ENCODE measurements at regions of chr12 and their contacts with region 1.

Region 1: GRCh38 chr12:10243818-10244520 is 31.3 kb downstream of the GABARAPL1 start:
- DNase-seq: no peak
- H3K4me3 ChIP-seq: no peak overlapping the region
- CTCF ChIP-seq: no peak
- POLR2A ChIP-seq: no peak

Region 2: GRCh38 chr12:9169979-9170634 is 1073.9 kb before region 1 on chr12:
- intact Hi-C with region 1: no loop called
- DNase-seq: no peak
- H3K4me3 ChIP-seq: no peak overlapping the region
- CTCF ChIP-seq: no peak
- POLR2A ChIP-seq: no peak

Region 3: DNA sequence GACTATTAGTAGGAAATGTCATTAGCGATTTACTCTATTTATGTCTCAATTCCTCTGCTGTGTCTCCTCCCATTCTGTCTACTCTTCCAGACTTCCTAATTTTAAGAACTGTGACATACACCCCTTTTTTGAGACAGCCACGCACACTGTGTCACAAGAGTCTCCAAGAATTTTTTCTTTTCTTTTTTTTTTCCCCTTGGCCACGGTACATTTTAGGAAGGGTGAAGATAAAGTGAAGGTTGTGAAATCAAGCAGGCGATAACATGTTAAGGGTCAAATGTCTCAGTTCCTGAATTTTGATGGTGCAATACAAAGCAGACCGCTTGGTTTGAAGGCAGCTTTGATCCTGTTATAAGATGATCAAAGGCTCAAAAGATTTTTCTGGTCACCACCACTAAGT is 76.4 kb before region 1 on chr12:
- intact Hi-C with region 1: no loop called
- DNase-seq: no peak
- H3K4me3 ChIP-seq: no peak overlapping the region
- CTCF ChIP-seq: no peak
- POLR2A ChIP-seq: no peak

Region 4: DNA sequence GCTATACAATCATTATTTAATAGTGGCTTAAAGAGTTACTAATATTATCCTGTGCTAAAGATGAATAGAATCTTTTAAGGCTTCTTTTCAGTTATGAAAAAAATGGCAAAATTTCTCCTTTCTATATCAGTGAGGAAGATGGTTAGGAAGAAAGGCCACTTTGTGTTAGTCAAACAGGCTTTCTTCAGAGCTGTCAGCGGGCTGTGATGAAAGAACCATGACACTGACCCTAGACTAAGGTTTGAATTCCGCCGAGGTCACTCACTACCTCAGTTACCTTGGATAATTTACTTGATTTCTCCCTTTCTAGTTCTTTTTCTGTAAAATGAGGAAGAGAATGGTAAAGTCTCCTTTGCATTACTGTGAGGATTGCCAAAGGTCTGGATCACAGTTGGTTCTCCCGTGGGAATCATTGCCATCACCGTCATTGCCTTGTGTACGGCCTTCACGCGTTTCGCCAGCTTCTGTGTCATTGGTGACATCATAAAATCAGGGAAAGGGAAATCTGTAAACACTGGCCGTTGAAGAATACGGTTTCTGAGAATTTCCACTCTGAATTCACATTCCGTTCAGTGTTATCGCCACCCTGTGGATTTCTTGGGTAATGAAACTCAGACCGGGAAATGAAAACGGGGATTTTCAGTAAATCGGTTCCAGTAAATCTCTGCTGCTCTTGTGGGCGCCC is 505.9 kb after region 1 on chr12:
- intact Hi-C with region 1: loop called (anchors 10 kb)
- DNase-seq: peak; percentile 88 to 91
- H3K4me3 ChIP-seq: no peak overlapping the region
- CTCF ChIP-seq: peak in 1 of 3 donors; percentile 92
- POLR2A ChIP-seq: no peak

Measured in lower leg skin (tissue), 4 donors.